Activated B cell treated with CpG ODN at 0.5 μM for 24 hours (primary cell): ENCODE measurements at regions of chr2 and their contacts with region 1.

Region 1: GRCh38 chr2:155377266-155377680 is 678.8 kb downstream of the KCNJ3 start:
- DNase-seq: no peak
- ATAC-seq: no peak
- H3K4me3 Mint-ChIP-seq: no peak overlapping the region
- H3K27ac Mint-ChIP-seq: no peak overlapping the region
- H3K4me1 Mint-ChIP-seq: peaks cover 2% of the 10 kb centered on the region
- H3K27me3 Mint-ChIP-seq: no peaks in the 10 kb centered on the region
- CTCF ChIP-seq: no peak

Region 2: GRCh38 chr2:155145758-155146229 is 231.5 kb before region 1 on chr2:
- CTCF ChIA-PET with region 1: no interaction called
- POLR2A ChIA-PET with region 1: no interaction called
- intact Hi-C with region 1: no loop called
- DNase-seq: no peak
- ATAC-seq: no peak
- H3K4me3 Mint-ChIP-seq: no peak overlapping the region
- H3K27ac Mint-ChIP-seq: no peak overlapping the region
- H3K4me1 Mint-ChIP-seq: no peaks in the 10 kb centered on the region
- H3K27me3 Mint-ChIP-seq: no peaks in the 10 kb centered on the region
- CTCF ChIP-seq: no peak

Region 3: GRCh38 chr2:156892467-156893281 is 1515.4 kb after region 1 on chr2:
- CTCF ChIA-PET with region 1: no interaction called
- POLR2A ChIA-PET with region 1: no interaction called
- intact Hi-C with region 1: loop called (anchors 1 kb)
- DNase-seq: no peak
- ATAC-seq: no peak
- H3K4me3 Mint-ChIP-seq: no peak overlapping the region
- H3K27ac Mint-ChIP-seq: no peak overlapping the region
- H3K4me1 Mint-ChIP-seq: no peaks in the 10 kb centered on the region
- H3K27me3 Mint-ChIP-seq: peaks cover 8% of the 10 kb centered on the region
- CTCF ChIP-seq: no peak

Region 4: GRCh38 chr2:157055660-157056199 is 1678.5 kb after region 1 on chr2:
- CTCF ChIA-PET with region 1: no interaction called
- POLR2A ChIA-PET with region 1: no interaction called
- intact Hi-C with region 1: loop called (anchors 2 kb)
- DNase-seq: no peak
- ATAC-seq: no peak
- H3K4me3 Mint-ChIP-seq: no peak overlapping the region
- H3K27ac Mint-ChIP-seq: no peak overlapping the region
- H3K4me1 Mint-ChIP-seq: no peaks in the 10 kb centered on the region
- H3K27me3 Mint-ChIP-seq: peaks cover 2% of the 10 kb centered on the region
- CTCF ChIP-seq: no peak

Region 5: GRCh38 chr2:157194097-157194688 is 1816.9 kb after region 1 on chr2:
- CTCF ChIA-PET with region 1: interaction called, 7 read pairs
- POLR2A ChIA-PET with region 1: no interaction called
- intact Hi-C with region 1: loop called (anchors 1 kb)
- DNase-seq: no peak
- ATAC-seq: no peak
- H3K4me3 Mint-ChIP-seq: no peak overlapping the region
- H3K27ac Mint-ChIP-seq: no peak overlapping the region
- H3K4me1 Mint-ChIP-seq: no peaks in the 10 kb centered on the region
- H3K27me3 Mint-ChIP-seq: peaks cover 6% of the 10 kb centered on the region
- CTCF ChIP-seq: no peak